WTC11 (cell line): ENCODE measurements at regions of chr12 and their contacts with region 1.

Region 1: DNA sequence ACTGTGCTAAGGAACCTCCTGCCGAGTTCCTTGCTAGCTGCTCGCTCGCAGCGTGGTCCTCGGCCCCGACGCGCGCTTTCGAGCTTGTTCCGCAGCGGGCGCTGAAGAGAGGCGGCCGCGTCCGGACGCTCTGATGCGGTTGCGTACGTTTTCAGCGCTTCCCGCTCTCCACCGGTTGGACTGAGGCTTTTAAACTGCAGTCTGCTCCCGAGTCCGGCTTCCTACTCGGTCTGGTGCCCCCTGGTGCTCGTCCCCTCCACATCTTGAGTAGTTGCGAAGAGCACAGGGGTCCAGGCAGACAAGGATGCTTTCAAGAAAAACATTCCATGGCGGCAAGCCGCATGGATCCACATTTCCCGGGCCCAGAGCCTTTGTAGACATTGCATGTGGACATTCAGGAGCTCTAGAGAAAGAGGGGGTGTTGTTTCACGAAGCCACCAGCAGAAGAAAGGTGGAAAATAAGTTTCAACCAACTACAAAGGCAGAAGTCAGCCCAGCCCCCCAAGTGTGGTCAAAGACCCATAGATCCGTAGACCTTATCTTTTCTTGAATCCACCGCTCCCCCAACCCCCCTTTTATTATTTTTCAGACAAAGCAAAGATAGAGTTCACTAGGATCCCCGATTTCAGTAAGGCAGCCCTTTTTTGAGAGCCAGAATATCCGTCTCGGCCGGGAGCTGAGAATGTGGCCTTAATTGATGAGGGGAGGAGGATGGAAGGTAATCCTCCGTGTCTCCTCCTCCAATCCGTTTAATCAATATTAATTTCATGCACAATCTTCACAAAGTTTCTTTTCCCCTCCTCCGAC is 984 bp upstream of the WNK1 start:
- DNase-seq: peak; percentile 94
- ATAC-seq: peak; percentile 65
- H3K4me3 Mint-ChIP-seq: no peak overlapping the region
- H3K27ac Mint-ChIP-seq: no peak overlapping the region
- H3K4me1 Mint-ChIP-seq: peaks cover 25% of the 10 kb centered on the region
- H3K27me3 Mint-ChIP-seq: no peaks in the 10 kb centered on the region
- CTCF ChIP-seq: 0 out of 2 replicates have a peak, but pooled peaks have one; percentile 40

Region 2: GRCh38 chr12:575948-576612 is 175.3 kb before region 1 on chr12:
- CTCF ChIA-PET with region 1: interaction called, 63 read pairs
- POLR2A ChIA-PET with region 1: interaction called, 12 read pairs
- DNase-seq: peak; percentile 83
- ATAC-seq: peak; percentile 88
- H3K4me3 Mint-ChIP-seq: no peak overlapping the region
- H3K27ac Mint-ChIP-seq: no peak overlapping the region
- H3K4me1 Mint-ChIP-seq: peaks cover 27% of the 10 kb centered on the region
- H3K27me3 Mint-ChIP-seq: peaks cover 12% of the 10 kb centered on the region
- CTCF ChIP-seq: peak; percentile 99

Region 3: GRCh38 chr12:630656-631632 is 120.5 kb before region 1 on chr12:
- CTCF ChIA-PET with region 1: interaction called, 21 read pairs
- POLR2A ChIA-PET with region 1: no interaction called
- DNase-seq: peak; percentile 61
- ATAC-seq: peak; percentile 82
- H3K4me3 Mint-ChIP-seq: peak overlapping the region; percentile 58
- H3K27ac Mint-ChIP-seq: peak overlapping the region; percentile 96
- H3K4me1 Mint-ChIP-seq: peaks cover 45% of the 10 kb centered on the region
- H3K27me3 Mint-ChIP-seq: no peaks in the 10 kb centered on the region
- CTCF ChIP-seq: no peak

Region 4: DNA sequence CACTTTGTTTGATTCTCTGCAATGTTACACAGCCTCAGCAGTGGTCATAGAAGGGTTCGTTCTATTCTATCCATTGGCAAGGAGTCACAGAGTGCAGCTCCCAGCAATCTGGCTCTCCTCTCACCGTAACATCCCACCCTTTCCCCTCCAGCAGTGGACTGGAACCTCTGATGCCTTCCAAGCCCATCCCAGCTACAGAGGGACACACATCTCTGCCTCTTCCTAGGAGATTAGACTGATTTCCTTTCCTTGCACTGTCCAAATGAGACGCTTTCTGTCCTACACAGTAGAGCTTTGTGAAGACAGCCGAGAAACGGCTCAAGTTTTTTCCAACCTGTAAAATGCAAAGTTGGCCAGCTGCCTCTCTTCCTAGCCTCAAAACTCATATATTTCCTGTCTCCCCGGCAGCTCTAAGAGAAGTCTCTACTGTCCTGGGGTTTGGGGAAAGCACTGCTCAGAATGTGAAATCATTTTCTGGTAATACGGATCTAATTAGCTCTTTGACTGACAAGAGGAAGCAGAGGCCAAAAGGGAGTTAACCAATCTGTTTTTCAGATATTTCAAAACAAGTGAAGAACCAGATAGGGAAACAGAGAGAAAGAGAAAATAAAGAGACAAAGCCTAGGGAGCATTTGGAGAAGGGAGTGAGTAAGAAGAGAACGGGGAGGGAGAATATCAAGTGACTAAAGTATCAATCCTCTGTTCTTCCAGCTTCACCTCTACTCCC is 88.7 kb before region 1 on chr12:
- CTCF ChIA-PET with region 1: interaction called, 41 read pairs
- POLR2A ChIA-PET with region 1: interaction called, 9 read pairs
- DNase-seq: no peak
- ATAC-seq: no peak
- H3K4me3 Mint-ChIP-seq: no peak overlapping the region
- H3K27ac Mint-ChIP-seq: no peak overlapping the region
- H3K4me1 Mint-ChIP-seq: peaks cover 19% of the 10 kb centered on the region
- H3K27me3 Mint-ChIP-seq: no peaks in the 10 kb centered on the region
- CTCF ChIP-seq: no peak

Region 5: GRCh38 chr12:712172-712863 is 39.1 kb before region 1 on chr12:
- CTCF ChIA-PET with region 1: interaction called, 11 read pairs
- POLR2A ChIA-PET with region 1: no interaction called
- DNase-seq: no peak
- ATAC-seq: no peak
- H3K4me3 Mint-ChIP-seq: no peak overlapping the region
- H3K27ac Mint-ChIP-seq: no peak overlapping the region
- H3K4me1 Mint-ChIP-seq: peaks cover 20% of the 10 kb centered on the region
- H3K27me3 Mint-ChIP-seq: no peaks in the 10 kb centered on the region
- CTCF ChIP-seq: no peak

Region 6: DNA sequence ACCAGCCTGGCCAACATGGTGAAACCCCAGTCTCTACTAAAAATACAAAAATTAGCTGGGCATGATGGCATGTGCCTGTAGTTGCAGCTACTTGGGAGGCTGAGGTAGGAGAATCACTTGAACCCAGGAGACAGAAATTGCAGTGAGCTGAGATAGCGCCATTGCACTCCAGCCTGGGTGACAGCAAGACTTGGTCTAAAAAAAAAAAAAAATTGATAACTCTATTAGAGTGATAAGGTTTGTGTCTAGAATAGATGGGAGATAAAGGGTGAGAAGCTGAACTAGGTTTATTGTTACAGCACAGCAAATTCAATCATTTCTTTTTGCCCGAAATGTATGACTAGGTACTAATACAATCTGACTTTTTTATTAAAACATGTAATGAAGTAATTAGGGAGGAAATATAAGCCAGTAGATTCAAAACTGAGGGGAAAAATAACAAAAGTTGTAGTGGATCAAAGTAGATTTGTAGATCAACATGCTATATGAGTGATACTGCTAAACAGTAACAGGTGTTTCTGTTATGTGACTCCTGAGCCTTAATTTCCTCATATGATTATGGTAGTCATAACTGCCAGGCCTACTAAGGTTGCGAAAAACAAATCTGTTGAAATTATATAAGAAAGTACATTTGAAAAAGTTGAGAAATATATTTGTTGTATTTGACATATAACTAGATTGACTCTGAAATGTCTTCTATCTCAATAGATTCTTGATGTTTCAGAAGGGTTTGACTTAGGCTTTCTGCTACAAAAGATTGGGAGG is 84.5 kb after region 1 on chr12:
- CTCF ChIA-PET with region 1: no interaction called
- POLR2A ChIA-PET with region 1: no interaction called
- DNase-seq: no peak
- ATAC-seq: no peak
- H3K4me3 Mint-ChIP-seq: no peak overlapping the region
- H3K27ac Mint-ChIP-seq: no peak overlapping the region
- H3K4me1 Mint-ChIP-seq: no peaks in the 10 kb centered on the region
- H3K27me3 Mint-ChIP-seq: no peaks in the 10 kb centered on the region
- CTCF ChIP-seq: no peak